Ovary (tissue), 10 donors: ENCODE measurements at regions of chr13 and their contacts with region 1.

Region 1: DNA sequence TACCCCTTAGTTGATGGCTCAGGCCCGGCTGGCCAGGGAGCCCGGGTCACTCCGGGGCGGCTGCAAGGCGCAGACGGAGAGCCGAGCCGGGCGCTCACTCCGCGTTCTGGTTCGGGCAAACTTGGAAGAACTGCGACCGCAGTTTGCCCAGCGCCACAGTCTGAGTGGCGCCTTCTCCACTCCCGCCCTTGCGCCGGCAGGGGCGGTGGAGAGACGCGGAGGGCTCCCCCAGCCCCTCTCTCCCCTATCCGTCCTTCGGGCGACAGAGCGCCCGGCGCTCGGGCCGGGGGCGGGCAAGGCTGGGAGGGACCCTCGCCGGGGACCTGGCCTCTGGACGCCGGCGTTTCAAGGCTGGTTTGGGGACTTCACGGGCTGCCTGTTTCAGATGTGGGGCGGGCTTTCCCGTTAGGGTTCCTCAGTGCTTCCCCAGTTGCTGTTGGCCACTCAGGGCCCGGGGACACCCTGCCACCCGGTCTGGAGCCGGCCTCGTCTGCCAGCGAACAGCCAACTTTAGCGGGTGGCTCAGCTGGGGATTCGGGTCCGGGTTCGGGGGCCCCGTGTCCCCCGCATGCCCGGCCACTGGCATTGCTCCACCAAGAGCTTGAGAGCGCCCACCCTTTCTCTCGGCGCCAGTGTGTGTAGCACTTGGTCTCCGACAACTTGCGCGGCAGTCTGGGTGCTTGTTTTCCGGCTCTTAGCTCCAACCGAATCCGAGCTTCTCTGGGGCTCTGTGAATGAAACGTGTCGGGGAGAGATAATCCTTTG is 1.5 kb downstream of the GPC6 start:
- DNase-seq: peak; percentile 58 to 79 (median 73)
- H3K4me3 ChIP-seq: peak overlapping the region; percentile 50
- H3K27ac ChIP-seq: peak overlapping the region; percentile 76 to 94
- H3K4me1 ChIP-seq: peaks cover 3% of the 10 kb centered on the region
- H3K27me3 ChIP-seq: no peaks in the 10 kb centered on the region
- CTCF ChIP-seq: peak; percentile 28 to 45 (median 40)
- EP300 ChIP-seq: no peak
- POLR2A ChIP-seq: no peak

Region 2: GRCh38 chr13:92510416-92510815 is 717.6 kb before region 1 on chr13:
- intact Hi-C with region 1: no loop called
- DNase-seq: no peak
- H3K4me3 ChIP-seq: no peak overlapping the region
- H3K27ac ChIP-seq: no peak overlapping the region
- H3K4me1 ChIP-seq: no peaks in the 10 kb centered on the region
- H3K27me3 ChIP-seq: no peaks in the 10 kb centered on the region
- CTCF ChIP-seq: no peak
- EP300 ChIP-seq: no peak
- POLR2A ChIP-seq: no peak

Region 3: DNA sequence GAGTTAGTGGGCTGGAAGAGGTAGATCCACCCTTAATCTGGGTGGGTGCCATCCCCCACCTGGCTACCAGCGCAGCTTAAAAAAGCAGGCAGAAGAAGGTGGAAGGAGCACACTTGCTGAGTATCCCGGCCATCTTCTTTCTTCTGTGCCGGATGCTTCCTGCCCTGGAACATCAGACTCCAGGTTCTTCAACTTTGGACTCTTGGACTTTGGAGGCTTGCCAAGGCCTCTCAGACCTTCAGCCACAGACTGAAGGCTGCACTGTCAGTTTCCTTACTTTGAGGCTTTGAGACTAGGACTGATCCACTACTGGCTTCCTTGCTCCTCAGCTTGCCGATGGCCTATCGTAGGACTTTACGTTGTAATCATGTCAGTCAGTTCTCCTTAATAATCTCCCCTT is 129.1 kb before region 1 on chr13:
- intact Hi-C with region 1: no loop called
- DNase-seq: peak in 1 of 5 donors; percentile 13
- H3K4me3 ChIP-seq: no peak overlapping the region
- H3K27ac ChIP-seq: no peak overlapping the region
- H3K4me1 ChIP-seq: no peaks in the 10 kb centered on the region
- H3K27me3 ChIP-seq: no peaks in the 10 kb centered on the region
- CTCF ChIP-seq: no peak
- EP300 ChIP-seq: no peak
- POLR2A ChIP-seq: no peak

Region 4: DNA sequence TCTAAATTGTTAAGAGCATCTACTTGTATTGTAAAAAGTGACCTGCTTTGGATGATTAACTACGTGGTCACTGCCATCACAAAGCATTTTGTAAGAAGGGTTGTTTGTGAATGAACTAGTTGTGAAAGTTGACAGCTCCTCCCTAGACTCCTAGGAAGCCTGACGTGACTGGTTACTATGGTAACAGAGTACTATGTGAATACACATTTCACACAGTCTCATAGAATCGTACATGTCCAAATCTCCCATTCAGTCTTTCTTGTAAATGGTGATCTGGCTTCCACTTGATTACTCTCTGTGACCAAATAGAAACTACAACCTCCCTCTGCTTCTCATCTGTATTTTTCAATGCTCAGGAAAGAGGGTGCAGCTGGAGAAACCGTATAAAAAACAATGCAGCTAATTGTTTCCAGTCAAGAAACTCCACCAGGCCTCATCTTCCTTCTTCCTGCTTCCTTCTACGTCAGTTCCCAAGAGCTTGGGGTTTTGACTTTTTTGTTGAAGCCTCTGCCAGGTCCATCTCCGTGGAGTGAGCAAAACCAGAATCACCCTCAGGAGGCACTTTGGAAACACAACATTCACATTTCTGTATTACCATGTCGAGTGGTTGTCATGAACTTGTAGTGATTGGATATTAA is 81.9 kb after region 1 on chr13:
- intact Hi-C with region 1: no loop called
- DNase-seq: no peak
- H3K4me3 ChIP-seq: no peak overlapping the region
- H3K27ac ChIP-seq: no peak overlapping the region
- H3K4me1 ChIP-seq: peaks cover 2% of the 10 kb centered on the region
- H3K27me3 ChIP-seq: no peaks in the 10 kb centered on the region
- CTCF ChIP-seq: no peak
- EP300 ChIP-seq: no peak
- POLR2A ChIP-seq: no peak

Region 5: DNA sequence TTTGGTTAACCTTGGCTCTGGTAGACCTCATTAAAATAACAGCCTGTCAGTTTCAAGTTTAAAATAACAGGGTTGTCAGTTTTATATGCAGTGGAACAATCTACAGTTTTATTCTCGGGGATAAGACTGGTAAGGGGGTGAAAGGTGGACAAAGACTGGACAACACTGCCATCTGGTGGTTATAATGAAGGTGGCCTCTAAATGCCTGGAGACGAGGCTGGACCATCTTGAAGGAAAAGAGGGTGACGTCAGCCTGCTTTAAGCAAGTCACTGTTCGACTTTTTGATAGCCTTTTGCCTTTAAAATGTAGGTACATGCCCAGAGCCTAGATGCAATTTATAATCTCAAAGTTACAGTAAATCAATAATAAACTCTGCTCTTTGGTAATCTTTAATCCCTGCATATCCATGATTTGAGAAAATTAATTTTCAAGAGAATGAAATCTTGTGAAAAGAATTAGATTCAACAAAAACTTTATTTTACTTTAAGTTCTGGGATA is 1134.4 kb after region 1 on chr13:
- intact Hi-C with region 1: loop called in 1 of 4 experiments (anchors 10 kb)
- DNase-seq: peak in 4 of 5 donors; percentile 50 to 78 (median 58)
- H3K4me3 ChIP-seq: no peak overlapping the region
- H3K27ac ChIP-seq: no peak overlapping the region
- H3K4me1 ChIP-seq: no peaks in the 10 kb centered on the region
- H3K27me3 ChIP-seq: no peaks in the 10 kb centered on the region
- CTCF ChIP-seq: peak; percentile 65 to 79 (median 78)
- EP300 ChIP-seq: no peak
- POLR2A ChIP-seq: no peak